GM18951 (cell line): ENCODE measurements at regions of chr6 and their contacts with region 1.

Region 1: DNA sequence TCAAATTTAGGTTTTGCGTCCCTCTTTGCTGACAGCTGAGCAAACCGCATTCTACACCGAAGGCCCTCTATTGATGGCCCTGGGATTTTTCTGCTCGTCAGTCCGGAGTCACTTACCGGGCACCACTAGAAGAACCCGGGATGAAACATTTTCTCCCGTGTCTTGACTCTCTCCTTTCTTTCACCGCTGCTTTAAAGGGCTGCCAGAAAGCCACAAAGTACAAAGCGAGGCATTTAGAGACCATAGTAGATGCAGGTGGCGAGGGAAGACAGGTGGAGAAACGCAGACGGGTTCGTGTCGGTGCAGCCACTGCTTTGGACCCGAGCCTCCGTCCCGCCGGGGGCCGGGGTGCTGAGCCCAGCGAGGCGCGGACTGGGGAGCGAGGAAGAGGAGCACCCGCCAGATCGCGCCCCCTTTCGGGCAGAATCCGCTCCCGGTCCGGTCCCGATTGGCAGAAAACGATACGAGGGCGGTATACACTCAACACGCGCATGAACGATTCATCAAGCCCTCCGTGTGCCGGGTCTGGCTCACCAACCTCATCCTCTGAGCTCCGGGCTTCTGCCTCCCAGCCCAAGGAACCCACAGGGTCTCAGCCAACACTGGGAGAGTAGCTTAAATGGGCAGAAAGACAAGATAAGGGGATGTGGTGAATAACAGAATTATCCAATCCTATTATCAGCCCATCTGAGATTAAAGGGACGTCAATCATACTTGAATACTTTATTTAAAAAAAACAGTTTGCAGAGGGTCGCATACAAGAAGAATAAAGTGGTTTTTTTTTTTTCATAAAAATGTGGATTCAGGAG is 84.9 kb downstream of the TRIM27 start:
- POLR2A ChIP-seq: no peak

Region 2: GRCh38 chr6:29016559-29017427 is 178.0 kb after region 1 on chr6:
- in situ Hi-C with region 1: loop called (anchors 10 kb)
- POLR2A ChIP-seq: no peak